IMR-90 (cell line): ENCODE measurements at regions of chr9 and their contacts with region 1.

Region 1: DNA sequence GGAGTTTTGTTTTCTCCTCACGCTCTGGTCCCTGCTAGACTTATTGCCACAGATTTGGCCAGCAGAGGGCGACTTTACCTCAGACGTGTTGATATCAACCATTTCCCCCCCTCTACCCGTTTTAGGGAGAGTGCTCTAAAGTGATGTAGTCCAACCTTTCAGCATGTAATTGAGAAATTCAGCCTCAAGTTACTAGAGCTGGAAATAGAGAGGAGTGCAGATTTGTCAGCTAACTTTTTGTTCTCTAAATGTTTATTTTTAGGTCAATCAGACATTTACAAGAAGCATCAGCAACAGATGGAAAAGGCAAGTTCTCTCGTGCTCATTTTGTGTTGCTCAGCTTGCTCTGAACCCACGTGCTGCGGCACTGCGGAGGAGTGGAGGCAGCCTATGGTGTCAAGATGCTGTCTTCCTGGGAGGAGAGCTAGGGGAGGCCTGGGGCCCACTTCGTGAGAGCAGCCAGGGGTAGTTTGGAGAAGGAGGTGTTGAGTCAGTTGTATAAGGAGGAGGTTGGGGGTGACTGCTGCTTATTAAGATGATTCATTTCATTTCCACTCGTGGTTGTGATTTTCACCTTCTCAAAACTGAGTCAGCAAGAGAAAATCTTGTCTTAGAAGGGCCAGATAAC is 53.6 kb downstream of the GPR107 start:
- DNase-seq: peak; percentile 87
- ATAC-seq: peak; percentile 90
- H3K4me3 ChIP-seq: no peak overlapping the region
- H3K27ac ChIP-seq: 0 out of 2 replicates have a peak overlapping the region, but pooled peaks have one; percentile 6
- H3K4me1 ChIP-seq: peaks cover 15% of the 10 kb centered on the region
- H3K27me3 ChIP-seq: no peaks in the 10 kb centered on the region
- CTCF ChIP-seq: peak; percentile 91
- POLR2A ChIP-seq: no peak
- RAD21 ChIP-seq: peak; percentile 91

Region 2: GRCh38 chr9:129495534-129496325 is 611.6 kb before region 1 on chr9:
- CTCF ChIA-PET with region 1: no interaction called
- POLR2A ChIA-PET with region 1: no interaction called
- dilution Hi-C with region 1: no loop called
- in situ Hi-C with region 1: no loop called
- intact Hi-C with region 1: no loop called
- DNase-seq: peak; percentile 84
- ATAC-seq: peak; percentile 75
- H3K4me3 ChIP-seq: peak overlapping the region; percentile 22
- H3K27ac ChIP-seq: peak overlapping the region; percentile 99
- H3K4me1 ChIP-seq: peaks cover 49% of the 10 kb centered on the region
- H3K27me3 ChIP-seq: no peaks in the 10 kb centered on the region
- CTCF ChIP-seq: no peak
- POLR2A ChIP-seq: no peak
- RAD21 ChIP-seq: no peak; the same call in 1 of the 2 replicates

Region 3: DNA sequence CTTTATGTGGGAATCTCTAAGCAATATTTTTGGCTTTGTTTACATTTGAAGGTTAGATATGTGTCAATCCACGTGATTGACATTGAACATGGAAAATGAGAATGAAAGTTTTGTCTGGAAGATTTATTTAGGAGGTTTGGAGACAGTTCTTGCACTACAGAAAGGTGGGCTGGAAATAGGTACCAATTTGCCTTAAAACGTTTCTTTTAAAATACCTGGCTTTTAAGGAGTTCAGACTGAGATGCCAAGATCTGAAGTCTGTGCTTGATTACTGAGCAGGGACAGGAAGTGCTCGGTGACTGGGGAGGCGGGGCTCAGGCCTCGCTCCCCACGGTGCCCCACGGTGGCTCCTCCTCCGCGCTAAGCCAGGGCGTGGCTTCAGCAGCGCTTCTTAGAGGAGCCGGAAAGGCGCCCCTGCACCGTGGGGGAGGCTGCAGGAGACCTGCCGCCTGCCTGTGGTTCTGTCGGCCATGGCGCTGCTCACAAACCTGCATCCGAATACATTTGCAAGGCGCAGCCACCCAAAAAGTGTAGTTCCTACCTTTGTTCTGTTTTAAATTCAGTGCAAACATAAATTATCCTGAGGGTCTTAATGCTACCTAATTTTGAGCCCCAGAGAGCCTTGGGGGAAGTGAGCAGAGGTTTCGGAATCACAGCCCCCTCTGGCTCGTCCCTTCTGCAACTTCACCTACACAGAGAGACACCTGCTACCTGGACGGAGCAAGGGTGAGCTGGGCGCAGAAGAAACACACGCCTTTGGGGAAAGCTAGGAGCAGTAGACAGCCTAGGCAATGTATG is 222.9 kb before region 1 on chr9:
- CTCF ChIA-PET with region 1: no interaction called
- POLR2A ChIA-PET with region 1: no interaction called
- dilution Hi-C with region 1: no loop called
- in situ Hi-C with region 1: no loop called
- intact Hi-C with region 1: loop called (anchors 5 kb)
- DNase-seq: peak; percentile 71
- ATAC-seq: peak; percentile 79
- H3K4me3 ChIP-seq: no peak overlapping the region
- H3K27ac ChIP-seq: no peak overlapping the region
- H3K4me1 ChIP-seq: peaks cover 28% of the 10 kb centered on the region
- H3K27me3 ChIP-seq: no peaks in the 10 kb centered on the region
- CTCF ChIP-seq: no peak
- POLR2A ChIP-seq: no peak
- RAD21 ChIP-seq: no peak

Region 4: GRCh38 chr9:130235897-130236668 is 128.7 kb after region 1 on chr9:
- CTCF ChIA-PET with region 1: interaction called, 7 read pairs
- POLR2A ChIA-PET with region 1: no interaction called
- dilution Hi-C with region 1: loop called (anchors 25 kb)
- in situ Hi-C with region 1: loop called (anchors 25 kb)
- intact Hi-C with region 1: loop called (anchors 1 kb)
- DNase-seq: peak; percentile 50
- ATAC-seq: peak; percentile 63
- H3K4me3 ChIP-seq: no peak overlapping the region
- H3K27ac ChIP-seq: no peak overlapping the region
- H3K4me1 ChIP-seq: peaks cover 8% of the 10 kb centered on the region
- H3K27me3 ChIP-seq: no peaks in the 10 kb centered on the region
- CTCF ChIP-seq: peak; percentile 87
- POLR2A ChIP-seq: no peak
- RAD21 ChIP-seq: peak; percentile 88

Region 5: DNA sequence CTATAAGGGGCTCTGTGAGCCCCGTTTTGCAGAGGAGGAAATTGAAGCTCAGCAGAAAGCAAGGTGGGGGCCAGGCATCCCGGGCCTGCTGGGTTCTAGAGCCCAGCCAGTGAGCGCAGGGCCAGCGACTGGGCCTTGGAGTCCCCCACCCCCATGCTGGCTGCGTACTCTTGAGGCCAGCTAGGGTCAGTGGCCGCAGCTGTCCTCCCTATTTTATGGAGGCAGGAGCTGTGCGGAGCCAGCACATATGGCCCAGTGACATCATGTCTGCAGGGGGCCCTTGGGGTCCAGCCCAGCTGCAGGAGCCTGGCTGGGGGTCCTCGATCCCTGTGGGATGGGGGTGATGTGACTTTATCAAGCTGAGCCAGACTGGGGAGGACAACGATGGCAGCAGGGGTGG is 229.5 kb after region 1 on chr9:
- CTCF ChIA-PET with region 1: interaction called, 3 read pairs
- POLR2A ChIA-PET with region 1: no interaction called
- dilution Hi-C with region 1: no loop called
- in situ Hi-C with region 1: loop called (anchors 5 kb)
- intact Hi-C with region 1: no loop called
- DNase-seq: no peak
- ATAC-seq: no peak
- H3K4me3 ChIP-seq: no peak overlapping the region
- H3K27ac ChIP-seq: no peak overlapping the region
- H3K4me1 ChIP-seq: peaks cover 5% of the 10 kb centered on the region; the same call in 1 of the 2 replicates
- H3K27me3 ChIP-seq: peaks cover 28% of the 10 kb centered on the region
- CTCF ChIP-seq: no peak
- POLR2A ChIP-seq: no peak
- RAD21 ChIP-seq: no peak

Region 6: DNA sequence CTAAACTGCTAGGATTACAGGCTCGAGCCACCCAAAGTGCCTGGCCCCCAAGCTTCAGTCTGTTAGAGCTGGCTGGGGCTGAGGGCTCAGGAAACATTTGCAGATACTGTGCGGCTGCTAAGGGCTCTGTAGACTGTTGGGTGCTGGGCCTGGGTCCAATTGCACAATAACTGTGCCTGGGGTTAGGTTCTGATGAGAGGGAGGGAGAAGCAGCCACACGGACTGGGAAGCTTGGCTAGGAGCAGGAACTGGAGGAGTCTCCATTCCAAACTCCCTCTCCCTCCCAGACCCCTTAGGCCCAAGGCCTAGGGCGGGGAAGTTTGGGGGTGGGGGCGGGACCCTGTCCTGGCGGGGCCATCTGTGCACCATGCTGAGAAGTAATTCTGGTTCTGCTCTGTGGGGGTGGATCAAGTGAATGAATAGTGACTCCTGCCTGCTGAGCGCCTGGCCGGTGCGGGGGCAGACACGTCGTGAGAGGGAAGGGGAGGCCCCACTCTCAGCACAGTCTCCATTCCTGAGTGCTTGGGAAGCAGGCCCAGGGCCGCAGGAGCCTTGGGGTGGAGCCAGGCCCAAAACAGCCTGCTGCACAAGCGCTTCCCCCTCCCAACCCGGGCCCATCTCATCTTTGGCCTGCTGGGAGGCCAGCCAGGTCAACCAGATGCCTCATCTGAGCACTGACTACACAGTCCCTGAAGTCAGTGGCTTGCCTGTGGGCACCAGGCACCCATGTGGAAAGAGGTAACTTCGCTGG is 338.9 kb after region 1 on chr9:
- CTCF ChIA-PET with region 1: no interaction called
- POLR2A ChIA-PET with region 1: no interaction called
- dilution Hi-C with region 1: no loop called
- in situ Hi-C with region 1: no loop called
- intact Hi-C with region 1: loop called (anchors 2 kb)
- DNase-seq: peak; percentile 94
- ATAC-seq: peak; percentile 73
- H3K4me3 ChIP-seq: no peak overlapping the region
- H3K27ac ChIP-seq: peak overlapping the region; percentile 81
- H3K4me1 ChIP-seq: peaks cover 36% of the 10 kb centered on the region
- H3K27me3 ChIP-seq: peaks cover 6% of the 10 kb centered on the region; the same call in 1 of the 2 replicates
- CTCF ChIP-seq: no peak
- POLR2A ChIP-seq: no peak
- RAD21 ChIP-seq: no peak

Region 7: DNA sequence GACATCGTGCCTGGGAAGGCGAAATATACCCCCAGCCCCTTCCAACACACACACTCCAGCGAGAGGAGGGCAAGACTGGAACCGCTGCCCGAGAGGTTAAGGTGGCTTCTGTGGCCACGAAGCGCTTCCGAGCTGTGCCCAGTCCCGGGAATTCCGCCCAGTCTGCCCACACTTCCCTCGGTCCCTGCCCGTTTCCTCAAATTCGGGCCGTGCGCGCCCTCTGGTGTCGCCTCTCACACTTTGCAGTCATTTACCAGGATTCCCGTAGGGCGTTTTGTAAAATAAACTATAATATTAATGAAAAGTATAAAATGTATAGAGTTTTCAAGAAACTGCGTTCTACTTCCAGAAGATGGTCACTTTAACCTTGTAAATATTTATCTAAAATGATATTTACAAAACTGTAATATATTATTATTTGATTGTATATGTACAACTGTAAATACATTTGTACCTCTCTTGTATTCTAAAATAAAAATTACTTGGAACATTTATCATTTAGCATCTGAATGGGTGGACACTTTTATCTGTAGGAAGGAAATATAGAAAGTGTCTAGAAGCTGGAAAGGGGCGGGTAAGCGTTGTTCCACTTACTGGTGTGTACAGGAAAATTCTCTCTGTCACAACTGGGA is 575.3 kb after region 1 on chr9:
- CTCF ChIA-PET with region 1: no interaction called
- POLR2A ChIA-PET with region 1: no interaction called
- dilution Hi-C with region 1: no loop called
- in situ Hi-C with region 1: no loop called
- intact Hi-C with region 1: loop called (anchors 5 kb)
- DNase-seq: peak; percentile 67
- ATAC-seq: peak; percentile 62
- H3K4me3 ChIP-seq: peak overlapping the region; percentile 14; the same call in 1 of the 2 replicates
- H3K27ac ChIP-seq: no peak overlapping the region
- H3K4me1 ChIP-seq: peaks cover 5% of the 10 kb centered on the region
- H3K27me3 ChIP-seq: peaks cover 15% of the 10 kb centered on the region
- CTCF ChIP-seq: peak; percentile 86
- POLR2A ChIP-seq: no peak
- RAD21 ChIP-seq: peak; percentile 86